Right ventricle myocardium inferior (tissue), 1 donor: ENCODE measurements at regions of chr11 and their contacts with region 1.

Region 1: GRCh38 chr11:16738193-16738946 is at the start of gene C11orf58:
- DNase-seq: peak; percentile 96
- ATAC-seq: peak; percentile 98
- total RNA-seq, gene C11orf58: 102 TPM

Region 2: GRCh38 chr11:15602785-15603567 is 1135.4 kb before region 1 on chr11:
- intact Hi-C with region 1: loop called (anchors 10 kb)
- DNase-seq: no peak
- ATAC-seq: peak; percentile 80

Region 3: DNA sequence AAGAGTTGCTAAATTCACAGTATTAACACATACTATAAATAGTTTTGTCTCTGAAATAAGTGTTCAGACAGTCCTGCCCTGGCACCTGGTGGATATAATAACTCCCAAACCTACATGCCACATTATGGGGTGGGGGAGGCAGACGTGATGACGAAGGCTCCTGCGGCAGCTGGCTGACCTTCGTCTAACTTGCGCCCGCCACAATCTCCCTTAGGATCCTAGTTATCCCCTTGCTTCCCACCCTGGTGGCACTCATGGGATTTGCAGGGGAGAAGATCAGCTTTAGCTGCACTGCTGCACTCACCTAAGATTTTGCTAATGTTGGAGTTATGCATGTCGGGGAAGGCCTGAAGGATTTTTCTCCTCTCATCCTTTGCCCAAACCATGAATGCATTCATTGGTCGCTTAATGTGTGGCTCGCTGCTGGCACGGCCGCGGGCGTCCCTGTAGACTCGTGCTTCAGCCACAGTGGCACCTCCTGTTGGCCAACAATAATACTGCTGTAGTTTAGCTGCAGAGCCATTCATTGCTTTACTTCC is 749.6 kb before region 1 on chr11:
- intact Hi-C with region 1: loop called (anchors 10 kb)
- DNase-seq: peak; percentile 51
- ATAC-seq: peak; percentile 81

Region 4: GRCh38 chr11:16528639-16529038 is 209.7 kb before region 1 on chr11:
- intact Hi-C with region 1: no loop called
- DNase-seq: no peak
- ATAC-seq: no peak

Region 5: GRCh38 chr11:16820324-16821092 is 82.1 kb after region 1 on chr11:
- intact Hi-C with region 1: no loop called
- DNase-seq: peak; percentile 87
- ATAC-seq: peak; percentile 61